ENCODE measurements at regions of chr13 and their contacts with region 1.

Region 1: DNA sequence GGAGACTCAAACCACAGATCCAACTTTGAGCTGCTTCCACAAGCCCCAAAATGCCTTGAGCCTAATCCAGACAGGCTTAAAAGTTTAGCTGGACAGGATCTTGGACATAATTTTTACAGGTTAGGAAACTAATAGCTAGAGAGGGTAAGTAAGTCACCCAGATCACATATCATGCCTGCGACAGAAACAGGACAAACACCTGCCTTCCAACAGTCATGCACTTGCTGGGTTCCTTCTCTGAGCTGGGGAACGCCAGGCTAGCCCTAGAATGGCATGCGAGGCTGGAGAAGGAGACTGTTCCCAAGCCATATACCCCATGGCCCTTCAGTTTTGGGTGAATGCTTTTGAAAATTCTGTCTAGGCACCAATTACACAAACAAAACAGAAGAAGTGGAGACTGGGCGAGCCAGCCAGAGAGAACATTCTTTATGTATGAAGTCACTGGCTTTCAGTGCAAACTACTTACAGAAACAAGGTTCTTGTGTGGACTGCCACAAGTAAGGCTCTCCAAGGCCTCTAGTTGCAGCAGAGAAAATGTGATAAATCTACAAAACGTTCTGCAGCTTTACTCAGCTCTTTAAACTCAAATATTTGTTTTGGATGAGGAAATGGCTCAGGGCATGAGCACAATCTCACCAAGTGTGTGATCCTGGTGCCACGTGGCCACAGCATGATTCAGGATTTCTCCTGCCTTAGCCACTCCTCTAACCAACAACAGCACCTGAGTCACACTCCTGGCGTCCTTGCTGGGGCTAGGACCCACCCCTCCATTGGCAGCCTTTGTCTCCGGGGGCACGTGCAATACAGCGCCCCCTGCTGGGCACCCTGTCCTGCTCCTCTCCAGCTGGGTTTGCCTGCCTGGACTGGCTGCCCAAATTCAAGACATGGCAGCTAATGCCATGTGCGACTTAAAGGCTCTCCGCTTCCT is 73.4 kb upstream of the UBL3 start:
- DNase-seq: peak; percentile 89 to 90 (median 89)
- ATAC-seq: peak; percentile 91
- H3K4me3 ChIP-seq: no peak overlapping the region
- H3K4me1 ChIP-seq: peaks cover 30% of the 10 kb centered on the region
- CTCF ChIP-seq: peak; percentile 83

Region 2: GRCh38 chr13:29861694-29862110 is 62.1 kb before region 1 on chr13:
- intact Hi-C with region 1: loop called in 1 of 2 experiments (anchors 5 kb)
- DNase-seq: no peak
- ATAC-seq: no peak
- H3K4me3 ChIP-seq: no peak overlapping the region
- H3K4me1 ChIP-seq: no peaks in the 10 kb centered on the region
- CTCF ChIP-seq: no peak

Region 3: GRCh38 chr13:30125422-30126073 is 201.7 kb after region 1 on chr13:
- intact Hi-C with region 1: no loop called
- DNase-seq: no peak
- ATAC-seq: peak; percentile 67
- H3K4me3 ChIP-seq: no peak overlapping the region
- H3K4me1 ChIP-seq: no peaks in the 10 kb centered on the region
- CTCF ChIP-seq: no peak